ENCODE measurements at regions of chr19 and their contacts with region 1.

Region 1: DNA sequence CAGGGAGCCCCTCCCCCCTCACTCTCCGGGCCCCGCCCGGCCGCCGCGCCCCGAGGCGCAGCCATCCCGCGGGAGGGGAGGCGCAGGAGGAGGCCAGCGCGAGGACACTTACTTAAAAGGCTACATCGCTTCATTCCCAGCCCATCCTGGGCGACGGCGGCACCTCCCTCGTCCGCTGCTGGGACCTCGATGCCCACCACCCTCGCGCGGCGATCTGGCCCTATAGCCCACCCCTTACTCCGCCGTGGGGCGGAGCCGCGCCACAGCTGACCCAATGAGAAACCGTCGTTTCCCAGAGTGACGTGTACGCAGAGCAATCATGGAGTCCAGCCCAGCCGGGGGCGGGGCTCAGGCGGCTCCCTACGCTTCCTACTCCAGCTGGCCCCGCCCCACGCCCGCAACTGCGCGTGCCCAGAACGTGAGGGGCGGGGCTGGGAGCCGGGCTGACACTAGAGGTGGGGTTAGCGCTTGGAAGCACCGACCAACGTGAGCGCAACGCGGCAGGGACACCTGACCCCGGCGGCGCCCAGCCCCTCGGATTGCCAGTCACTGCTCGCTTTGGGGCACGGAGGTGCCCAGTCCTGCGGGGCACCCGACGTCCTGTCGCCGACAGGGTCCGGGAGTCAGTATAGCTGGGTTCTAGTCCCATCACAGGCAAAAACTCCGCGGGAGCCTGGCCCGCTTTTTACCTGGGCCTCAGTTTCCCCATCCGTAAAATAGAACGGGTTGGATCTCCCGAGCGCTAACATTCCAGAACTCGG is at the start of gene ANKRD27:
- DNase-seq: peak; percentile 96
- ATAC-seq: peak; percentile 95
- H3K4me3 ChIP-seq: peak within 1 kb of the TSS; percentile 97
- H3K27ac ChIP-seq: peak within 1 kb of the TSS; percentile 81
- H3K4me1 ChIP-seq: peaks cover 9% of the 10 kb centered on the region; the same call in 1 of the 2 replicates
- H3K27me3 ChIP-seq: peaks cover 32% of the 10 kb centered on the region
- CTCF ChIP-seq: no peak
- POLR2A ChIP-seq: peak; percentile 38; the same call in 1 of the 2 replicates
- RAD21 ChIP-seq: no peak
- total RNA-seq, gene ANKRD27: 31.4 and 35.0 TPM in 2 replicates

Region 2: GRCh38 chr19:32719611-32720059 is 44.5 kb after region 1 on chr19 and contains the start of gene TDRD12:
- CTCF ChIA-PET with region 1: no interaction called
- POLR2A ChIA-PET with region 1: no interaction called
- dilution Hi-C with region 1: no loop called
- in situ Hi-C with region 1: no loop called
- intact Hi-C with region 1: no loop called
- DNase-seq: no peak
- ATAC-seq: no peak
- H3K4me3 ChIP-seq: no peak within 1 kb of the TSS
- H3K27ac ChIP-seq: no peak within 1 kb of the TSS
- H3K4me1 ChIP-seq: no peaks in the 10 kb centered on the region
- H3K27me3 ChIP-seq: no peaks in the 10 kb centered on the region
- CTCF ChIP-seq: no peak
- POLR2A ChIP-seq: no peak
- RAD21 ChIP-seq: no peak
- total RNA-seq, gene TDRD12: under 0.01 TPM in 2 replicates

Region 3: GRCh38 chr19:32914879-32915660 is 239.9 kb after region 1 on chr19:
- CTCF ChIA-PET with region 1: no interaction called
- POLR2A ChIA-PET with region 1: no interaction called
- dilution Hi-C with region 1: no loop called
- in situ Hi-C with region 1: no loop called
- intact Hi-C with region 1: loop called (anchors 5 kb)
- DNase-seq: no peak
- ATAC-seq: no peak
- H3K4me3 ChIP-seq: no peak overlapping the region
- H3K27ac ChIP-seq: no peak overlapping the region
- H3K4me1 ChIP-seq: no peaks in the 10 kb centered on the region
- H3K27me3 ChIP-seq: no peaks in the 10 kb centered on the region
- CTCF ChIP-seq: no peak
- POLR2A ChIP-seq: no peak
- RAD21 ChIP-seq: no peak

Region 4: GRCh38 chr19:33064792-33065550 is 389.8 kb after region 1 on chr19 and contains the start of gene RHPN2:
- CTCF ChIA-PET with region 1: no interaction called
- POLR2A ChIA-PET with region 1: no interaction called
- dilution Hi-C with region 1: no loop called
- in situ Hi-C with region 1: no loop called
- intact Hi-C with region 1: loop called (anchors 1 kb)
- DNase-seq: peak; percentile 45
- ATAC-seq: peak; percentile 97
- H3K4me3 ChIP-seq: peak within 1 kb of the TSS; percentile 48
- H3K27ac ChIP-seq: no peak within 1 kb of the TSS
- H3K4me1 ChIP-seq: no peaks in the 10 kb centered on the region
- H3K27me3 ChIP-seq: peaks cover 5% of the 10 kb centered on the region; the same call in 1 of the 2 replicates
- CTCF ChIP-seq: no peak
- POLR2A ChIP-seq: no peak
- RAD21 ChIP-seq: no peak
- total RNA-seq, gene RHPN2: 2.2 and 2.3 TPM in 2 replicates

Measured in IMR-90 (cell line).